Vagina (tissue), 2 donors: ENCODE measurements at regions of chr1 and their contacts with region 1.

Region 1: GRCh38 chr1:194322751-194323150 is 1136.3 kb upstream of the B3GALT2 start:
- DNase-seq: no peak
- H3K4me3 ChIP-seq: no peak overlapping the region
- H3K27ac ChIP-seq: no peak overlapping the region
- H3K4me1 ChIP-seq: no peaks in the 10 kb centered on the region
- H3K27me3 ChIP-seq: no peaks in the 10 kb centered on the region
- CTCF ChIP-seq: no peak
- POLR2A ChIP-seq: no peak

Region 2: GRCh38 chr1:192382758-192383157 is 1940.0 kb before region 1 on chr1:
- intact Hi-C with region 1: no loop called
- DNase-seq: no peak
- H3K4me3 ChIP-seq: no peak overlapping the region
- H3K27ac ChIP-seq: no peak overlapping the region
- H3K4me1 ChIP-seq: no peaks in the 10 kb centered on the region
- H3K27me3 ChIP-seq: no peaks in the 10 kb centered on the region
- CTCF ChIP-seq: no peak
- POLR2A ChIP-seq: no peak

Region 3: DNA sequence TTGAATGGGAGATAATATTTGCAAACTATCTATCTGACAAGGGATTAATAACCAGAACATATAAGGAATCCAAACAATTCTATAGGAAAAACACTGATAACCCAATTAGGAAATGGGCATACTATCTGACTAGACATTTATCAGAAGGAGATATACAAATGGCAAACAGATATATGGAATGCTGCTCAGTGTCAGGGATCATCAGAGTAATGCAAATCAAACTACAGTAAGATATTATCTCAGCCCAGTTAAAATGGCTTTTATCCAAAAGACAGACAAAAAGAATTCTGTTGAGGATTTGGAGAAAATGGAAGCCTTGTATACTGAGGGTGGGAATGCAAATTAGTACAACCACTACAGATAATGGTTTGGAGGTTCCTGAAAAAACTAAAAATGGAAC is 378.3 kb before region 1 on chr1:
- intact Hi-C with region 1: loop called (anchors 10 kb)
- DNase-seq: no peak
- H3K4me3 ChIP-seq: no peak overlapping the region
- H3K27ac ChIP-seq: no peak overlapping the region
- H3K4me1 ChIP-seq: no peaks in the 10 kb centered on the region
- H3K27me3 ChIP-seq: no peaks in the 10 kb centered on the region
- CTCF ChIP-seq: no peak
- POLR2A ChIP-seq: no peak